ENCODE measurements at regions of chr2 and their contacts with region 1.

Region 1: DNA sequence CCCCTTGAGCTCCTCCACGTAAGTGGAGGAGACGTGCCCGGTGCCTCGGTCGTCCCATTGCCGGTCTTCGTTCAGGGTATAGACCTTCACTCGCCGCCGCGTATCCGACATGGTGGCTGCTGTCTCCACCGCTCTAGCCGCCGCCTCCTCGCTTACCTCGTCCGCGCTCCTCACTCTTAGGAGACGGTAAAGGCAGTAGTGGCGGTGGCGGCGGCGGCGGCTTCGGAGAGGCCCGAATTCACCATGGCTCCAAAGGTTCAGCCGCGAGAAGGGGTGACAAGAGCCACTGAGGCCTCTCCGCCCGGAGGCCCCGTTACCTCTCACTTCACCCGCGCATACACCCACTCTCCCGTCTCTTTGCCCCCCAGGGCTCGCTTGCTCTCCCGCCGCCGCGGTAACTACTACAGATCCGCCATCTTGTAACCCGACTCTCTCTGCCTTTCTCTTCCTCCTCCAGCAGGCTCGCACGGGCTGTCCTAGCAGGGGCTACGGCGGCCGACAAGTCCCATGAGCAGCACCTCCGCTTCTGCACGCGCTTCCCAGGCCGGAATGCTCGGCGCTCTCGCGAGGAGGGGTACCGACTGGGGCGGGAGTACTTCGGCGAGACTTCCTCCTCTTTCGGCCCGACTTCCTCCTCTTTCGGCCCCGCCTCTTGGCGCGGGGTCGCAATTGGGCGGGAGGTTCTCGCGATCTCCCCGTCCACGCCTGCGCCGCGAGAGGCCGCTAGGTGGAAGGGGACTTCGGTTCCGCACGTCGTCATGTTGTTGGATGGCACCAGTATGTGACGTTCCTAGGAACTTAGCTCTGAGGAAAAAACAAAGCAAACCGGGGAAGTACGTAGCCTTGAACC is at the start of gene PPP4R3B:
- DNase-seq: peak; percentile 99
- H3K4me3 Mint-ChIP-seq: no peak within 1 kb of the TSS
- H3K27ac Mint-ChIP-seq: no peak within 1 kb of the TSS
- H3K4me1 Mint-ChIP-seq: peaks cover 21% of the 10 kb centered on the region
- H3K27me3 Mint-ChIP-seq: no peaks in the 10 kb centered on the region
- total RNA-seq, gene PPP4R3B: 55.4 to 57.2 TPM

Region 2: GRCh38 chr2:53786705-53787612 is 1830.4 kb before region 1 on chr2 and contains the starts of genes ASB3 and ERLEC1:
- CTCF ChIA-PET with region 1: no interaction called
- intact Hi-C with region 1: loop called (anchors 10 kb)
- DNase-seq: peak; percentile 90
- H3K4me3 Mint-ChIP-seq: peak within 1 kb of the TSS; percentile 95
- H3K27ac Mint-ChIP-seq: peak within 1 kb of the TSS; percentile 89
- H3K4me1 Mint-ChIP-seq: peaks cover 50% of the 10 kb centered on the region
- H3K27me3 Mint-ChIP-seq: no peaks in the 10 kb centered on the region
- total RNA-seq, gene ASB3: 17.2 to 19.1 TPM
- total RNA-seq, gene ERLEC1: 16.7 to 18.5 TPM

Region 3: DNA sequence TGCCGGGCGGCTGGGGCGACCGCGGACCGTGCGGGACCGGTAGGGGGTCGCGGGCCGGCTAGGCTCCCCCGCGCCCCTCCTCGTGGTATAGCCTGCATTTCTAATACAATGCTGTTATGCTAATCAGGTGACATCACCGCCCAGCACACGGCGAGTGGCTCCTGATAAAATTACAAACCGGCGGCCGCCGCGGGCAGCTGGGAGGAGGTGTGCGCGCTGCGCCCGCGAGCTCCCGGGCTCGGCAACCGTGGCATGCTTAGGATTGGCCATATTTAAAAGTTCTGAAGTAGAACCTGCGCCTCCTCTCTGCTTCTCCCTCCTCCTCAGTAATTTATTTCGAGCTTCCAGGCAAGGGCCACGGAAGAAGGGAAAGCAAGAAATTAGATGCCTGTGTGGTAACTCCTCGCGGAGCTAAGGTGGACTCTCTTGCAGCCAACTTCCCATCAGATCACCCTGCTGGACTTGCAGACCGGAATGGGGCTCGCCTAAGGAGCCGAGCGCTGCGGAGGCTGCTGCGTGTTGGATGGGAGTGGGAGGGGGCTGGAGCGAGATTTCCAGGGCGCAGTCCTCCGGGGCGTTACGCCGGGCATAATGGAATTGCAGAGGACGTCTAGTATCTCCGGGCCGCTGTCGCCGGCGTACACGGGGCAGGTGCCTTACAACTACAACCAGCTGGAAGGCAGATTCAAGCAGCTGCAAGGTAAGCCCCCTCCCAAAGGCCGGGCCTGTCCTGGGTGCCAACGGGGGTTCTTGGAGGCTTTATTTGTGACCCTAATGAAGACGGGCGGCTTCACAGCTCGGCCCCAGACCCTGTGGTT is 1059.0 kb before region 1 on chr2:
- CTCF ChIA-PET with region 1: no interaction called
- intact Hi-C with region 1: loop called (anchors 5 kb)
- DNase-seq: peak; percentile 83
- H3K4me3 Mint-ChIP-seq: peak overlapping the region; percentile 87
- H3K27ac Mint-ChIP-seq: peak overlapping the region; percentile 99
- H3K4me1 Mint-ChIP-seq: peaks cover 43% of the 10 kb centered on the region
- H3K27me3 Mint-ChIP-seq: no peaks in the 10 kb centered on the region

Region 4: DNA sequence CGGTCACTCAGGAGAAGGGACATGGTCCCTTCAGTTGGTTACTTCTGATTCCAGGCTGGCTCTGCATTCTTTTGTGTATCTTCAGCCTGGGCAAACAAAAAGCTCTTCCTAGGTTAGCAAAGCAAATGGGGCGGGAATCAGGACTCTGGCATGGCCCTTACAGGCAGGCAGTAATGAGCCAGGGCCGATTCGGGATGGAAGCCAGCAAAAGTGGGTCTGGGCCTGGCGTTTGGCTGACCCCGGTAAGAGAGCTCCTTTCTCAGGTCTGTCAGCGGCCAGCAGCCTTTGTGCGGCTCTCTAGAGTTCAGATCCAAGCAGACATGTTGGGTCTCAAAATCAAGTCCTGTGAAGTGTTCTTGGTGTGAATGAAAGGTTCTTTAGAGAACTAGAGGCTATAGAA is 975.4 kb before region 1 on chr2:
- CTCF ChIA-PET with region 1: no interaction called
- intact Hi-C with region 1: no loop called
- DNase-seq: no peak
- H3K4me3 Mint-ChIP-seq: no peak overlapping the region
- H3K27ac Mint-ChIP-seq: peak overlapping the region; percentile 41
- H3K4me1 Mint-ChIP-seq: peaks cover 17% of the 10 kb centered on the region
- H3K27me3 Mint-ChIP-seq: no peaks in the 10 kb centered on the region

Region 5: DNA sequence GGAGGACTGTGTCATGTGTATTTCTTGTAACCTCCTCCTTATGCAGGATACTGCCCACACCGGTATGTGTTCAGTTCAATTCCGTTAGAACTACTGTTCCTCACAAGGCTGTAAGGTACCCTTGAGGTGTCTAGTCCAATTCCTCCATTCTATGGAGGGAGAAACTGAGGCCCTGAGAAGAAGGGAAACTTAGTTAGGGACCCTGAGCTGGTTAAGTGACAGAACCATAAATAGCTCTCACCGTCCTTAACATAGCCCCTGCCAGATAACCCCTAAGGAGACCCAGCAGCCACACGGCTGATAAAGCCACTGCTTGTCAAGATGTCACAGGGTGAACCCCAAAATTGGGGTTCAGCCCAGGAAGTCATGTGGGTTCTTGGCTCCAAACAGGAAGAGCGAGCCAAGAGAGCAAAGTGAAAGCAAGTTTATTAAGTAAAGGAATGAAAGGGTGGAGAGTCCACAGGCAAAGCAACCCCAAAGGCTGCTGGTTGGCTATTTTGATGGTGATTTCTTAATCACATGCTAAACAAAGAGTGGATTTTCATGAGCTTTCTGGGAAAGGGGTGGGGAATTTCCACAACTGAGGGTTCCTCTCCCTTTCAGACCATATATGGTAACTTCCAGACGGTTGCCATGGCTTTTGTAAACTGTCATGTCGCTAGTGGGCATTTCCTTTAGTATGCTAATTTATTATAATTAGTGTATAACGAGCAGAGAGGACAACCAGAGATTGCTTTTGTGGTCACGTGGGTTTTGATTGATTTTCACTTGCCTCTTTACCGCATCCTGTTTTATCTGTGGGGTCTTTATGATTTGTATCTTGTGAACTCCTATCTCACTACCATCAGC is 483.7 kb before region 1 on chr2:
- CTCF ChIA-PET with region 1: no interaction called
- intact Hi-C with region 1: loop called (anchors 2 kb)
- DNase-seq: peak; percentile 80
- H3K4me3 Mint-ChIP-seq: peak overlapping the region; percentile 75
- H3K27ac Mint-ChIP-seq: peak overlapping the region; percentile 95
- H3K4me1 Mint-ChIP-seq: peaks cover 25% of the 10 kb centered on the region
- H3K27me3 Mint-ChIP-seq: no peaks in the 10 kb centered on the region

Region 6: DNA sequence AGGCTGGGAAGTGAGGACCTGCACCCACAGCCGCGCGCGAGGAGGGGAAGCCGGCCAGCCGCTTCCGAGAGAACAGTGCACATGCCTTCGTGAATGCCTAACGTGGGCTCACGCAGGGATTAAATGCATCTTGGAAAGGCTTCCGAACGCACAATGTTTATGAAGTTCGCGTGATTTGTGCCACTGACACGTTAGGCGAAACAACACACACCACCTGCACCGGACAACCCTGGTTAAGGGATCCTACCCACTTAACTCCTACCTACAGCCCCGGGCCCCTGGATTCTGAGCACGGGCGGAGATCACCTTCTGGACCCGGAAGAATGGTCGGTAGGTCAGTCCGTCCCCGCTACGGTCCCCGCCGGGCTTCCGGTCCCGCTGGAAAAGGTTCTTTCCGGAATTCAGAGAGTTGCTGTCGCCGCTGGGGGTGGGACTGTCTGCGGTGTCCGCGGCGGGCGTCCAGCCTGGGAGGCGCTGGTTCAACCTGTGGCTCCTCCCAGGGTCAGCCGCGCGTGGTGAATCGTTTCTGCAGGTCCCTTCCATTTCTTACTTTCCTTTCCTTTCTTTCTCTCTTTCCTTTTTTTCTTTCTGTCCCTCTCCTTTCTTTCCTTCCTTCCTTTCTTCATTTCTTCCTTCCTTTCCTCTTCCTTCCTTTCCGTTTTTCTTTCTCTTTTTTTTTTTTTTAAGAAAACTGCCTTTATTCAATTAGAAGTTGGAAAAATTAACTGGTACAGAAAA is 348.3 kb before region 1 on chr2 and contains the start of gene MTIF2:
- CTCF ChIA-PET with region 1: no interaction called
- intact Hi-C with region 1: loop called (anchors 1 kb)
- DNase-seq: peak; percentile 93
- H3K4me3 Mint-ChIP-seq: peak within 1 kb of the TSS; percentile 89
- H3K27ac Mint-ChIP-seq: peak within 1 kb of the TSS; percentile 93
- H3K4me1 Mint-ChIP-seq: peaks cover 14% of the 10 kb centered on the region
- H3K27me3 Mint-ChIP-seq: no peaks in the 10 kb centered on the region
- total RNA-seq, gene MTIF2: 43.9 to 44.2 TPM

Region 7: GRCh38 chr2:55419679-55420438 is 197.5 kb before region 1 on chr2 and contains the start of gene CCDC88A:
- CTCF ChIA-PET with region 1: no interaction called
- intact Hi-C with region 1: loop called (anchors 1 kb)
- DNase-seq: peak; percentile 89
- H3K4me3 Mint-ChIP-seq: peak within 1 kb of the TSS; percentile 86
- H3K27ac Mint-ChIP-seq: peak within 1 kb of the TSS; percentile 53
- H3K4me1 Mint-ChIP-seq: peaks cover 18% of the 10 kb centered on the region
- H3K27me3 Mint-ChIP-seq: peaks cover 10% of the 10 kb centered on the region
- total RNA-seq, gene CCDC88A: 9.7 to 10.7 TPM

Region 8: GRCh38 chr2:55581435-55581834 is 36.0 kb before region 1 on chr2:
- CTCF ChIA-PET with region 1: no interaction called
- intact Hi-C with region 1: loop called (anchors 5 kb)
- DNase-seq: no peak
- H3K4me3 Mint-ChIP-seq: no peak overlapping the region
- H3K27ac Mint-ChIP-seq: peak overlapping the region; percentile 18
- H3K4me1 Mint-ChIP-seq: peaks cover 29% of the 10 kb centered on the region
- H3K27me3 Mint-ChIP-seq: no peaks in the 10 kb centered on the region

Region 9: GRCh38 chr2:55672630-55673029 is 55.2 kb after region 1 on chr2:
- CTCF ChIA-PET with region 1: no interaction called
- intact Hi-C with region 1: no loop called
- DNase-seq: no peak
- H3K4me3 Mint-ChIP-seq: no peak overlapping the region
- H3K27ac Mint-ChIP-seq: no peak overlapping the region
- H3K4me1 Mint-ChIP-seq: no peaks in the 10 kb centered on the region
- H3K27me3 Mint-ChIP-seq: no peaks in the 10 kb centered on the region

Region 10: DNA sequence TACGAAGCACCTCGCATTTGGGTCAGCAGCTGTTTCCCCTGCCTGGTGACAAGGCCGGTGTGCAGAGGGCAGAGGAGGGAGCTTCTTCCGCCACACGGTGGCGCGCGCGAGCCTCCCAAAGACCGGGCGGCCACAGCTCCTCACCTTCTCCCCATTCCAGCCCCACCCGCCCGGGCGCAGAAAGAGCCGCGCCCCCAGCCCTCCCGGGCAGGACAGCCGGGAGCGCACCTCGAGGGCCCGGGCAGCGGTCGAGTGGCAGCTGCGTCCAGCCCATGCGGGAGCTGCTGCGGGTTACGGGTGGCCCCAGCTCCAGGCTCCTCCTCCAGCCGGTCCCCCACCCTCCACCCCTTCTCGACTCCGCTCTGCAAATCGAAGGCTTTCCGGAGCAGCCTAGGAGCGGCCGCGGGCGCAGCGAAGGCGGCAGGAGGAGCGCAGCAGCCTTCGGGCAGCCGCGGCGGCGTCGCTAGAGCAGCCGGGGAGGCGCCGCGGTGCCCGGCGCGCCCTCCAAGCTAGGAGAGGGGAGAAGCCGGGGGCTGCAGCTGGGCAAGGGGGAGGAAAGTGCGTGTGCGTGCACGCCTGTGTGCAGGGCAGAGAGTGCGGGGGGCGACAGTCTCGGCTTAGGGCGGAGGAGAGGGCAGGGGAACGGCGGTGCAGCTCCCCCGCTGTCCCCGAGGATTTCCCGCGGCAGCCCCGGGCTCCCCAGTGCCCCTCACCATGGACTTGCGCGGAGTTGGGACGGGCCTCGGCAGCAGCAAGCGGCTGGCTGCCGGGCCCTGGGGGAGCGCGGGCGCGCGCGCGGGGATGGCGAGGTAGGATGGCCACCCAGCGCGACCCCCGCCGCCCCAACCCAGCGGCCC is 566.5 kb after region 1 on chr2 and contains the start of gene CCDC85A:
- CTCF ChIA-PET with region 1: no interaction called
- intact Hi-C with region 1: no loop called
- DNase-seq: peak; percentile 76
- H3K4me3 Mint-ChIP-seq: peak within 1 kb of the TSS; percentile 38
- H3K27ac Mint-ChIP-seq: no peak within 1 kb of the TSS
- H3K4me1 Mint-ChIP-seq: peaks cover 3% of the 10 kb centered on the region
- H3K27me3 Mint-ChIP-seq: peaks cover 61% of the 10 kb centered on the region
- total RNA-seq, gene CCDC85A: not detected

Measured in activated naive CD4-positive, alpha-beta T cell treated with anti-CD3 and anti-CD28 coated beads for 36 hours (primary cell).